Kidney (tissue), 22 donors: ENCODE measurements at regions of chr6 and their contacts with region 1.

Region 1: DNA sequence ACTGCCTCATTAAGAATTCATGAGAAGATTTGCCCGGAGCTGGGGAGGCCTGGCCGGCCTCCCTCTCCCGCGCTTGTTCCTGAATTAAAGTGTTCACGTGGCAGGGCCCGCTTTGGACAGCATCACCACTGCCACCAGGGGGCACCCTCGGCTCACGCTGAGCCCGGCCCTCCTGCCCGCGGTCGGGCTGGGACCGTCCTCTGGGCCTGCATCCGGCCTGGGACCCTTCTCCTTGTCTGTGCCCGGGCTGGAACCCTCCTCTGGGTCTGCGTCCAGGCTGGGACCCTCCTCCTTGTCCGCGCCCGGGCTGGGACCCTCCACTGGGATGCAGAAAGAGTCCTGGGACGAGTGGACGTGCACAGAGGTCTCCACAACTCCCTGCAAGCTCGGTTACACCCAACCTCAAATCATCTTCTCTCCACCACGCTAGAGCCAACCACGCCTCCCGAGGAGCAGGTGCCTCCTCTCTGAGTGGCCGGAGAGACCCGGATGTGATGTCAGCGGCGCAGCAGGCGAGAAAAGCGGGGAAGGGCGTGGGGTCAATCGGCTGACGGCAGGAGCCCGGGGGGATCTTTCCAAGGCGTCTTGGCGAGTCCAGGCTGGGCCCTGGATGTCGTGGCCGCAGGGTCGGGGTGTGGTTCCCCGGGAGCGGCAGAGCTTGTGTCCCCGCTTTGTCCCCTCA is 50.9 kb upstream of the DACT2 start:
- DNase-seq: peak; percentile 79 to 89 (median 82)
- H3K4me3 ChIP-seq: no peak overlapping the region
- H3K27ac ChIP-seq: no peak overlapping the region
- H3K4me1 ChIP-seq: no peaks in the 10 kb centered on the region
- H3K27me3 ChIP-seq: no peaks in the 10 kb centered on the region
- CTCF ChIP-seq: peak; percentile 84

Region 2: GRCh38 chr6:168884646-168885086 is 514.2 kb after region 1 on chr6:
- intact Hi-C with region 1: loop called (anchors 10 kb)
- DNase-seq: peak; percentile 79 to 89 (median 85)
- H3K4me3 ChIP-seq: peak overlapping the region; percentile 13 to 67 (median 44)
- H3K27ac ChIP-seq: no peak overlapping the region
- H3K4me1 ChIP-seq: peaks cover 0 to 4% (median 0%) of the 10 kb centered on the region in 3 donors
- H3K27me3 ChIP-seq: no peaks in the 10 kb centered on the region
- CTCF ChIP-seq: peak; percentile 93